MCF 10A (cell line): ENCODE measurements at regions of chr19 and their contacts with region 1.

Region 1: DNA sequence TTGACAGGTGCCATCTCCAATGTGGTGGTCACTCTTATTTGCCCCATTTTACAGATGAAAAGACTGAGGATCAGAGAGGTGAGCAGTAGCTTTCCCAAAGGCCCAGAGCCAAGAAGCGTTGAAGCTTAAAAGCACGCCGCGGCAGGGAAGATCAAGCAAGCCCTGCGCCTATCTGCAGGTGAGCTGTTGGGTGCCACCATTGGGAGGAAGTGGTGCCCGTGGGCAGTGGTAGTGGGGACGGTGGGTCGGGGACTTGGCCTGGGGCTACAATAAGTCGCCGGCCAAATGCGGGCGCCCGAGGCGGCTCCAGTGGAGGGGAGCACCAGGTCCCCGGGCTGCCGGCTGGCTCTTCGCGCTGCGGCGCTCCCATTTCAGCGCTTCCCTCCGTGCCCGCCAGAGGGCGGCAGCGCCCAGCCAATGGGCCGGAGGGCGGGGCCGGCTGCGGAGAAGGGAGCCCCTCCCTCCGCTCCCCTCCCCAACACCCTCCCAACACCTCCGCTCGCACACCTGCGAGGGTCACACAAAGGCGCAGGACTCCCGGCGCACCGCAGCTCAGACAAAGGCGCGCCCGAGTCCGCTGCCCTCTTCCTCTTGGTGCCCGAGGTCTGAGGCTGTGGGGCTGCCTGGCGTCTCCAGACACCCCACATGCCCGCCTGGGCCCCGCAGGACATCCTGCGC is 744 bp upstream of the POU2F2 start:
- DNase-seq: peak; percentile 57
- H3K4me3 Mint-ChIP-seq: peak overlapping the region; percentile 47
- H3K27ac Mint-ChIP-seq: no peak overlapping the region
- H3K4me1 Mint-ChIP-seq: peaks cover 15% of the 10 kb centered on the region
- H3K27me3 Mint-ChIP-seq: peaks cover 8% of the 10 kb centered on the region
- CTCF ChIP-seq: peak; percentile 98

Region 2: GRCh38 chr19:42113641-42114348 is 19.2 kb before region 1 on chr19:
- CTCF ChIA-PET with region 1: interaction called, 31 read pairs
- POLR2A ChIA-PET with region 1: interaction called, 12 read pairs
- intact Hi-C with region 1: loop called (anchors 1 kb)
- DNase-seq: peak; percentile 97
- H3K4me3 Mint-ChIP-seq: peak overlapping the region; percentile 46
- H3K27ac Mint-ChIP-seq: peak overlapping the region; percentile 92
- H3K4me1 Mint-ChIP-seq: peaks cover 33% of the 10 kb centered on the region
- H3K27me3 Mint-ChIP-seq: no peaks in the 10 kb centered on the region
- CTCF ChIP-seq: peak; percentile 6

Region 3: DNA sequence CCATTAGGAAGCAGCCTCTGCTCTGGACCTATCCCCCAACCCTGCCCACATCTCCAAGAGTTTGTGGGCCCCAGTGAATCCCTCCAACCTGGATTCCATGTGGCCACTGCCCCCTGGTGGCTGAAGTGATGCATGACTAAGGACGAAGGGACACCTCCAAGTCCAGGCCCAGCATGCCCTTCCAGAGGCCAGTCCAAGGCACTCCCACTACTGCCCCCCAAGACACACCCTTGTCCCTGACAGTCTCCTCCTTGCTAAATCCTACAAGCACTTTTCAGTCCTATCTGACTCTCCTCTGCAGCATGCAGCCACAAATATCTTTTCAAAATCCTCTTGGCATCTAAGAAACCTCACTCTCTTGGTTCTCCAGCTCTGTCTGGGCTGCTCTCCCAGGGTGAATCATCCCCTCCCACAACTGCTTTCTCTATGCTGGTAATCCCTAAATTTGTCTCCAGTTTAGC is 51.4 kb after region 1 on chr19:
- CTCF ChIA-PET with region 1: interaction called, 61 read pairs
- POLR2A ChIA-PET with region 1: interaction called, 4 read pairs
- intact Hi-C with region 1: loop called (anchors 1 kb)
- DNase-seq: peak; percentile 87
- H3K4me3 Mint-ChIP-seq: no peak overlapping the region
- H3K27ac Mint-ChIP-seq: no peak overlapping the region
- H3K4me1 Mint-ChIP-seq: peaks cover 14% of the 10 kb centered on the region
- H3K27me3 Mint-ChIP-seq: peaks cover 12% of the 10 kb centered on the region
- CTCF ChIP-seq: peak; percentile 89

Region 4: GRCh38 chr19:42295831-42296525 is 163.0 kb after region 1 on chr19:
- CTCF ChIA-PET with region 1: interaction called, 4 read pairs
- POLR2A ChIA-PET with region 1: no interaction called
- intact Hi-C with region 1: loop called (anchors 1 kb)
- DNase-seq: peak; percentile 76
- H3K4me3 Mint-ChIP-seq: no peak overlapping the region
- H3K27ac Mint-ChIP-seq: no peak overlapping the region
- H3K4me1 Mint-ChIP-seq: peaks cover 6% of the 10 kb centered on the region
- H3K27me3 Mint-ChIP-seq: no peaks in the 10 kb centered on the region
- CTCF ChIP-seq: peak; percentile 93

Region 5: DNA sequence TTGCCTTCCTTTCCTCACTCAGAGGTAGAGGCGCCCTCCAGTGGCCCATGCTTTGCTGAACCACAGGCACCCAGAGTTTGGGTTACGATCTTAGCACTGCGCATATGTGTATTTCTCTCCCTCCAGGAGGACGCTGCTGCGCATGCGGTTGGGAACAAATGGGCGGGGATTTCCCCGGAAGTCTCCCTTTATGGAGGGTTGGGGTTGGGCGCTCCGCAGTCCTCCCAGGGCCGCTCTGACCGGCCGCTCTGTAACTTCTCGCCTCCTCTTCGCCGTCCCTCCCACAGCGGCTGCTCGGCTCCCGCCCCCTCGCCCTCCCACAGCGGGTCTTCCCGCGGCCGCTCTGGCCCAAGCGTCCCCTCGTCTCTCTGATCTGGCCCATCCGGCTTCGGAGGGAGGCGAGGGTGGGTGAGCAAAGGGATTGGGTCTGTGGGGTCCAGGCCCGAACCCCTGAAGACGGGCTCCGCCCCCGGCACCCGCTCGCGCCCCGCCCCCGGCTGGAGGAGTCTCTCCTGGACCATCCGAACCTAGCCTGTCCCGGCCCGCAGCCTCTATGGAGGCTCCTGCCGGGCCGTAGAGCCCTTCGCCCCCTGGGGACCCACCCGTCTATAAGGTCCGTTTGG is 192.4 kb after region 1 on chr19 and contains the start of gene MEGF8:
- CTCF ChIA-PET with region 1: interaction called, 3 read pairs
- POLR2A ChIA-PET with region 1: no interaction called
- intact Hi-C with region 1: loop called (anchors 1 kb)
- DNase-seq: peak; percentile 99
- H3K4me3 Mint-ChIP-seq: peak within 1 kb of the TSS; percentile 87
- H3K27ac Mint-ChIP-seq: peak within 1 kb of the TSS; percentile 73
- H3K4me1 Mint-ChIP-seq: peaks cover 14% of the 10 kb centered on the region
- H3K27me3 Mint-ChIP-seq: no peaks in the 10 kb centered on the region
- CTCF ChIP-seq: peak; percentile 76
- total RNA-seq, gene MEGF8: 13.0 and 20.6 TPM in 2 replicates